Cardiac septum (tissue), 1 donor: ENCODE measurements at regions of chr11 and their contacts with region 1.

Region 1: GRCh38 chr11:47152953-47153950 is 23.4 kb downstream of the ARFGAP2 start:
- DNase-seq: peak; percentile 84

Region 2: GRCh38 chr11:46889689-46890475 is 263.4 kb before region 1 on chr11:
- intact Hi-C with region 1: loop called (anchors 1 kb)
- DNase-seq: no peak

Region 3: GRCh38 chr11:46977038-46977813 is 176.0 kb before region 1 on chr11:
- intact Hi-C with region 1: no loop called
- DNase-seq: no peak